Caco-2 (cell line): ENCODE measurements at regions of chr14 and their contacts with region 1.

Region 1: DNA sequence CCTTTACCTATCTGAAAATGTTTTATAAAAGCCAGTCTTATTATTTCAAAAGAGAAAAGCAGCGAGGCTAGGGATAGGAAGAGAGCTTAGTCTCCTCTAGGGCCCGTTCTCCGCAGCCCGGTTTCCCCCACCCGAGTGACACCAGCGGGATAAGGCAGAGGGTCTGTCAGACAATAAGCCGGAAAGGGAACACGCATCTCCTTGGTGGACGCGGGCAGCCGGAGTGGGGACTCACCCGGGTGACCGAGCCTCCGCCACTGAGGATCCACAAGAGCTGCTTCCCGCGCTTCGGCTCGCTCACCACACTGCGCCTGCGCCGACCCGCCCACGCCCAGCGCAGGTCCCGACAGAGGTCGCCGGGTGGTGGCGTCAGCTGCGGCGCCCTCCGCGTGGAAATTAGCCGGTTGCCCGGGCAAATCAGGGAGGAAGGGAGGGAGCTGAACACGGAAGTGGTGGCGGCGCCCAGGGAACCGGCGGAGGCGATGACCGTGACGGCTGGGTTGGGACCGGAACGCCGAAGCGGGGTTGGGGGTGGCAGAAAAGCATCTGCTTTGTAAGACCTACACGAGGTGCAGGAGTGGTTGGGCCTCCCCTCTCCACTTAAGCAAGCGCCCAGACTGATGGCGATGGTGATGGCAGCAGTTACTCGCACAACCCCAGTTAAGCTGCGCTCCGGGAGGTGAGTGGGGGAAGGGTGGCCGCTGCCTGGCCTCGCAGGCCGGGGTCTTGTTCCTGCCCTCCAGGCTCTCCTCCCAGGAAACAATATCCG is at the starts of genes SOCS4 and WDHD1:
- DNase-seq: peak; percentile 96 to 98
- H3K4me3 ChIP-seq: peak within 1 kb of the TSS; percentile 86
- H3K4me3 Mint-ChIP-seq: peak within 1 kb of the TSS; percentile 73
- H3K27ac Mint-ChIP-seq: peak within 1 kb of the TSS; percentile 79
- H3K4me1 ChIP-seq: peaks cover 42% of the 10 kb centered on the region
- H3K4me1 Mint-ChIP-seq: peaks cover 35% of the 10 kb centered on the region
- H3K27me3 ChIP-seq: no peaks in the 10 kb centered on the region
- H3K27me3 Mint-ChIP-seq: no peaks in the 10 kb centered on the region
- CTCF ChIP-seq: no peak
- total RNA-seq, gene SOCS4: 21.1 and 24.8 TPM in 2 replicates
- total RNA-seq, gene WDHD1: 25.5 and 27.5 TPM in 2 replicates

Region 2: DNA sequence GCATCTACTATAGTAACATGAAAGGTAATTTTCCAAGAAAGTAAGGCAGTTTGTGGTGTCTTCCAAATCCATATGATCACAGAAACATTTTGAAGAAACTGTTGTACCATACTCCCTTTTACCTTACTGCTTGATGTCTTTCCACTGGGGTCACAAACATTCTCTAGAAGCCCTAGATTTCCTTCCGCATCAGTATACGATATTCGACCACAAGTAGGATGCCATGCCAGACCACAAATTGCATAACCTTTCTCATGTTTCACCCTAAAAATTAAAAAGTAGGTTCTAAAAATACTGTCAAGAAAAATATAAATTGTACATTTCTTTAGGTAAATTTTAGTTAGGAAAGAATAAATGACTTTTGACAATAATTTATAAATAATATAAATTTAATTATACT is 26.6 kb before region 1 on chr14:
- CTCF ChIA-PET with region 1: no interaction called
- POLR2A ChIA-PET with region 1: no interaction called
- intact Hi-C with region 1: no loop called
- DNase-seq: no peak
- H3K4me3 ChIP-seq: no peak overlapping the region
- H3K4me3 Mint-ChIP-seq: no peak overlapping the region
- H3K27ac Mint-ChIP-seq: no peak overlapping the region
- H3K4me1 ChIP-seq: no peaks in the 10 kb centered on the region
- H3K4me1 Mint-ChIP-seq: no peaks in the 10 kb centered on the region
- H3K27me3 ChIP-seq: no peaks in the 10 kb centered on the region
- H3K27me3 Mint-ChIP-seq: no peaks in the 10 kb centered on the region
- CTCF ChIP-seq: no peak

Region 3: GRCh38 chr14:55077155-55077554 is 50.2 kb after region 1 on chr14:
- CTCF ChIA-PET with region 1: no interaction called
- POLR2A ChIA-PET with region 1: interaction called, 13 read pairs
- intact Hi-C with region 1: no loop called
- DNase-seq: peak; percentile 50 to 74
- H3K4me3 ChIP-seq: no peak overlapping the region
- H3K4me3 Mint-ChIP-seq: peak overlapping the region; percentile 73
- H3K27ac Mint-ChIP-seq: peak overlapping the region; percentile 99
- H3K4me1 ChIP-seq: peaks cover 25% of the 10 kb centered on the region
- H3K4me1 Mint-ChIP-seq: peaks cover 25% of the 10 kb centered on the region
- H3K27me3 ChIP-seq: no peaks in the 10 kb centered on the region
- H3K27me3 Mint-ChIP-seq: no peaks in the 10 kb centered on the region
- CTCF ChIP-seq: no peak

Region 4: GRCh38 chr14:55191203-55192053 is 164.5 kb after region 1 on chr14 and contains the start of gene DLGAP5:
- CTCF ChIA-PET with region 1: interaction called, 3 read pairs
- POLR2A ChIA-PET with region 1: interaction called, 11 read pairs
- intact Hi-C with region 1: no loop called
- DNase-seq: peak; percentile 95 to 97
- H3K4me3 ChIP-seq: peak within 1 kb of the TSS; percentile 59
- H3K4me3 Mint-ChIP-seq: peak within 1 kb of the TSS; percentile 99
- H3K27ac Mint-ChIP-seq: peak within 1 kb of the TSS; percentile 99
- H3K4me1 ChIP-seq: peaks cover 8% of the 10 kb centered on the region; the same call in 1 of the 2 replicates
- H3K4me1 Mint-ChIP-seq: peaks cover 15% of the 10 kb centered on the region
- H3K27me3 ChIP-seq: no peaks in the 10 kb centered on the region
- H3K27me3 Mint-ChIP-seq: no peaks in the 10 kb centered on the region
- CTCF ChIP-seq: no peak
- total RNA-seq, gene DLGAP5: 49.7 and 54.1 TPM in 2 replicates